PC-9 (cell line): ENCODE measurements at regions of chr18 and their contacts with region 1.

Region 1: GRCh38 chr18:43620936-43621335 is 343.6 kb upstream of the SYT4 start:
- DNase-seq: no peak
- H3K4me3 ChIP-seq: no peak overlapping the region
- H3K27ac ChIP-seq: no peak overlapping the region
- H3K4me1 ChIP-seq: no peaks in the 10 kb centered on the region
- H3K27me3 ChIP-seq: no peaks in the 10 kb centered on the region
- CTCF ChIP-seq: peak; percentile 67

Region 2: DNA sequence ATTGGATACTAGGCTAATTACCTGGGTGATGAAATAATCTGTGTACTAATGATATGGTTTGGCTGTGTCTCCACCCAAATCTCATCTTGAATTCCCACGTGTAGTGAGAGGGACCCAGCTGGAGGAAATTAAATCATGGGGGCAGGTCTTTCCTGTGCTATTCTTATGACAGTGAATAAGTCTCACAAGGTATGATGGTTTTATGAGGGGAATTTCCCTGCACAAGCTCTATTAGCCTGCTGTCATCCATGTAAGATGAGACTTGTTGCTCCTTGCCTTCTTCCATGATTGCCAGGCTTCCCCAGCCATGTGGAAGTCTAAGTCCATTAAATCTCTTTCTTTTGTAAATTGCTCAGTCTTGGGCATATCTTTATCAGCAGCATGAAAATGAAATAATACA is 50.5 kb after region 1 on chr18:
- CTCF ChIA-PET with region 1: no interaction called
- POLR2A ChIA-PET with region 1: no interaction called
- intact Hi-C with region 1: no loop called
- DNase-seq: no peak
- H3K4me3 ChIP-seq: no peak overlapping the region
- H3K27ac ChIP-seq: no peak overlapping the region
- H3K4me1 ChIP-seq: no peaks in the 10 kb centered on the region
- H3K27me3 ChIP-seq: no peaks in the 10 kb centered on the region
- CTCF ChIP-seq: no peak

Region 3: GRCh38 chr18:43719351-43719750 is 98.4 kb after region 1 on chr18:
- CTCF ChIA-PET with region 1: no interaction called
- POLR2A ChIA-PET with region 1: no interaction called
- intact Hi-C with region 1: loop called (anchors 1 kb)
- DNase-seq: peak; percentile 88 to 90
- H3K4me3 ChIP-seq: no peak overlapping the region
- H3K27ac ChIP-seq: peak overlapping the region; percentile 67
- H3K4me1 ChIP-seq: peaks cover 19% of the 10 kb centered on the region
- H3K27me3 ChIP-seq: no peaks in the 10 kb centered on the region
- CTCF ChIP-seq: no peak

Region 4: GRCh38 chr18:43978174-43978573 is 357.2 kb after region 1 on chr18:
- CTCF ChIA-PET with region 1: no interaction called
- POLR2A ChIA-PET with region 1: no interaction called
- intact Hi-C with region 1: no loop called
- DNase-seq: no peak
- H3K4me3 ChIP-seq: no peak overlapping the region
- H3K27ac ChIP-seq: no peak overlapping the region
- H3K4me1 ChIP-seq: no peaks in the 10 kb centered on the region
- H3K27me3 ChIP-seq: no peaks in the 10 kb centered on the region
- CTCF ChIP-seq: no peak

Region 5: GRCh38 chr18:45621061-45621511 is 2000.2 kb after region 1 on chr18:
- CTCF ChIA-PET with region 1: no interaction called
- POLR2A ChIA-PET with region 1: no interaction called
- intact Hi-C with region 1: loop called (anchors 5 kb)
- DNase-seq: peak in 1 of 2 experiments; percentile 7
- H3K4me3 ChIP-seq: no peak overlapping the region
- H3K27ac ChIP-seq: no peak overlapping the region
- H3K4me1 ChIP-seq: no peaks in the 10 kb centered on the region
- H3K27me3 ChIP-seq: peaks cover 10% of the 10 kb centered on the region
- CTCF ChIP-seq: peak; percentile 94